ENCODE measurements at regions of chr10 and their contacts with region 1.

Region 1: DNA sequence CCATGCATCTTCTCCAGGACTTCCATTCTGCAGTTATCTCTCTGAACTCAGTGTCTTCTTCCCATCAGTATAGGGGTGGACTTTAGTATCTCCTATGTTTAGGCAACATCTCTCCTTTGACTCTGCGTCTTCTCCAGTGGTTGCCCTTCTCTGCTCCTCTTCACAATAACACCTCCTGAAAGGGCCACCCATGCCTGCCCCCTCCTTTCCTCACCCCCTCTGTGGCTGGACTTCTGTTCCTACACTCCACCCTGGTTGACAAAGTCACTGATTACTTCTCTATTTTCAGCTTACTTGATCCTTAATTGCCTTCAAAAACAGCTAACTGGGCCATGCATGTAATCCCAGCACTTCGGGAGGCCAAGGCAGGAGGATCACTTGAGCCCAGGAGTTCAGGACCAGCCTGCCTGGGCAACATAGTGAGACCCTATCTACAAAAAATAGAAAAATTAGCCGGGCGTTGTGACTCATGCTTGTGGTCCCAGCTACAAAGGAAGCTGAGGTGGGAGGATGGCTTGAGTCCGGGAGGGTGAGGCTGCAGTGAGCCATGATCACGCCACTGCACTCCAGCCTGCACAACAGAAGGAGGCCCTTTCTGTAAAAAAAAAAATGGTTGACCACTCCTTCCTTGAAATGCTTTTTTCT is 13.7 kb downstream of the SRGN start:
- DNase-seq: peak; percentile 26
- H3K4me3 ChIP-seq: no peak overlapping the region
- H3K27ac ChIP-seq: no peak overlapping the region
- H3K4me1 ChIP-seq: no peaks in the 10 kb centered on the region
- H3K27me3 ChIP-seq: no peaks in the 10 kb centered on the region
- CTCF ChIP-seq: no peak

Region 2: DNA sequence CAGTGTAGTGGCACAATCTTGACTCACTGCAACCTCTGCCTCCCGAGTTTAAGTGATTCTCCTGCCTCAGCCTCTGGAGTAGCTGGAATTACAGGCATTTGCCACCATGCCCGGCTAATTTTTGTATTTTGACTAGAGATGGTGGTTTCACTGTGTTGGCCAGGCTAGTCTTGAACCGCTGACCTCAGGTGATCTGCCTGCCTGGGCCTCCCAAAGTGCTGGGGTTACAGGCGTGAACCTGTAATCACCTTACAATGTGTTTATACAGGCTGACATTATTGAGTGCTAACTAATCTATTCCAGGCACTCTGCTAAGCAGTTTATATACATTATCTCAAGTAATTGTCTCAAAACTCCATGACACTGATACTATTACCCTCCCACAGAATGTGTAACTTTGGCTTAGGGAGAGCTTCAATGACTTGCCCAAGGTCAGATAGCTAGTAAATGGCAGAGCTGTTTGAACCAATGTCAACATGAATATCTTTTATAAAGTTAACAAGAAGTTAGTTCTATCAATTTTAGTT is 76.1 kb before region 1 on chr10:
- CTCF ChIA-PET with region 1: no interaction called
- dilution Hi-C with region 1: loop called (anchors 5 kb)
- in situ Hi-C with region 1: no loop called
- intact Hi-C with region 1: no loop called
- DNase-seq: no peak
- H3K4me3 ChIP-seq: no peak overlapping the region
- H3K27ac ChIP-seq: no peak overlapping the region
- H3K4me1 ChIP-seq: no peaks in the 10 kb centered on the region
- H3K27me3 ChIP-seq: no peaks in the 10 kb centered on the region
- CTCF ChIP-seq: no peak

Region 3: DNA sequence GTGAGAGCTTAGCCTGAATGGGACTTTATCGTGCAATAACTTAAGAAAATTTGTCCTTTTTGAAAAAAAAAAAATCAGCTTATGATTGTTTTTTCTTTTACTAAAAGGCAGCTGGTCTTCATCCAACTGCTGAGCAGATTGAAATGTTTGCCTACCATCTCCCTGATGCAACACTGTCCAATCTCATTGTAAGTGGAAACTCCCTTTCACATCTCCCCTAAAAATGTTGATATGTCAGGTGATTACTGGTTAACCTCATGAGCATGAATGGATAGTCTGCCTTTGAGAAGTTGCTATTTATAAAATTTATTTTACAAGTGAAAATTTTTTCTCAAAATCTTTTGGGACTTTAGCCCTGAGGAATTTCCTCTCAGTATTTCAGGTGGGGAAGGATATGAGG is 100.8 kb after region 1 on chr10:
- CTCF ChIA-PET with region 1: no interaction called
- dilution Hi-C with region 1: no loop called
- in situ Hi-C with region 1: no loop called
- intact Hi-C with region 1: no loop called
- DNase-seq: no peak
- H3K4me3 ChIP-seq: no peak overlapping the region
- H3K27ac ChIP-seq: no peak overlapping the region
- H3K4me1 ChIP-seq: no peaks in the 10 kb centered on the region
- H3K27me3 ChIP-seq: no peaks in the 10 kb centered on the region
- CTCF ChIP-seq: no peak

Measured in mammary epithelial cell (primary cell).